T-cell (primary cell): ENCODE measurements at regions of chr9 and their contacts with region 1.

Region 1: GRCh38 chr9:113932906-113933584 is 56.9 kb downstream of the ZNF618 start:
- DNase-seq: no peak
- ATAC-seq: no peak
- H3K4me3 ChIP-seq: no peak overlapping the region
- H3K4me3 Mint-ChIP-seq: no peak overlapping the region
- H3K27ac ChIP-seq: no peak overlapping the region
- H3K27ac Mint-ChIP-seq: no peak overlapping the region
- H3K4me1 ChIP-seq: no peaks in the 10 kb centered on the region
- H3K4me1 Mint-ChIP-seq: no peaks in the 10 kb centered on the region
- H3K27me3 ChIP-seq: no peaks in the 10 kb centered on the region
- H3K27me3 Mint-ChIP-seq: peaks cover 2 to 5% of the 10 kb centered on the region in 2 donors

Region 2: DNA sequence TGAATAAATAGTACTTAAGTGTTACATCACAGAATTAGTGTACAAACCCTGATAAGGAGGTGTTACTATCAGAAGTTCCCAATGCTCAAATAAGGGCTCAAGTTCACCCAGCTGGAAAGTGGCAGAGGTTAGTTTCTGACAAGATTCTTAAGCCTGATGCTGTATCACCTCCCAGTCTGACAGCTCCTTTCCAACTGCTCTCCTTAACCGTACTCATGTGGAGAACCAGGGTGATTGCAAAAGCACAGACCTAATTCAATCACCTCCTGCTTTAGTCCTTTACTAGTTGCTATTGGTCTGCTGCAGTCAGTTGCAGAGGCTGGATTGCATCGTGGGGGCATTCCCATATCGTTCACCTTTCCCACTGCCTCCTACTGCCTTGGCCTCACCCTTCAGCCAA is 157.3 kb before region 1 on chr9:
- CTCF ChIA-PET with region 1: no interaction called
- POLR2A ChIA-PET with region 1: no interaction called
- DNase-seq: no peak
- ATAC-seq: no peak
- H3K4me3 ChIP-seq: no peak overlapping the region
- H3K4me3 Mint-ChIP-seq: no peak overlapping the region
- H3K27ac ChIP-seq: no peak overlapping the region
- H3K27ac Mint-ChIP-seq: no peak overlapping the region
- H3K4me1 ChIP-seq: no peaks in the 10 kb centered on the region
- H3K4me1 Mint-ChIP-seq: no peaks in the 10 kb centered on the region
- H3K27me3 ChIP-seq: peaks cover 0 to 6% of the 10 kb centered on the region in 2 experiments
- H3K27me3 Mint-ChIP-seq: peaks cover 13 to 15% of the 10 kb centered on the region in 2 donors

Region 3: GRCh38 chr9:113943112-113944009 is 10.3 kb after region 1 on chr9:
- CTCF ChIA-PET with region 1: no interaction called
- POLR2A ChIA-PET with region 1: no interaction called
- DNase-seq: no peak
- ATAC-seq: no peak
- H3K4me3 ChIP-seq: no peak overlapping the region
- H3K4me3 Mint-ChIP-seq: no peak overlapping the region
- H3K27ac ChIP-seq: no peak overlapping the region
- H3K27ac Mint-ChIP-seq: no peak overlapping the region
- H3K4me1 ChIP-seq: no peaks in the 10 kb centered on the region
- H3K4me1 Mint-ChIP-seq: no peaks in the 10 kb centered on the region
- H3K27me3 ChIP-seq: peaks cover 0 to 4% of the 10 kb centered on the region in 2 experiments
- H3K27me3 Mint-ChIP-seq: peaks cover 0 to 6% of the 10 kb centered on the region in 2 donors

Region 4: DNA sequence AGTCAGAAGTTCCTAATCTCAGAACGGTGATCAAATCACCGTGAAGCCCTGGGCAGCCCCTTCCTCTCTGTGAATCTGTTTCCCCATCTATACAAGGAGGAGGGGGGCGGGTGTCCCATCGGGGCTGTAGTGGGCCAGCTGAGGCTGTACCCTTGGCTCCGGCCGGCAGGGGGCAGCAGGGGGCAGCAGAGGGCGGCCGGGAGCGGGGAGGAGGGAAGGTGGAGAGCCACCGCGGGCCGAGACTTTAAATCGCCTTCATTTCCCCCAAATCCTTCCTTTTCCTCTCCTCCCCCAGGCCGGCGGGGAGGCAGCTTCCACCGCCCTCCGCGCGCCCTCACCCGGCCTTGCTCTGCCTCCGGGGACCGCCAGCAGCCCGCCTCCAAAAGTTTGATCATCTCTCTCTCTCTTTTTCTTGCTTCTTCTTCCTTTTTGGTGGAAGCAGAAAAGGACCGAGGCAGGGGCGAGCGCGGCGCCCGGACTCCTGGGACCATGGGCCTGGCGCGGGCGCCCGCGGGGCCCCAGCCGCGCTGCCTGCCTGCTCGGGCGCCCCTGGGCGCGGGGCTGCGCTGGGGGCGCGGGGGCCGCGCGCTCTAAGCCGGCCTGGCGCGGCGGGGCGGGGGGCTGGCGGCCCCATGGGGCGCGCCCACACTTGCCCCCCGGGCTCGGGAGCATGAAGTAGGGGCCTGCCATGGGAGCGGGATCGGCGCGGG is 222.4 kb after region 1 on chr9 and contains the start of gene COL27A1:
- CTCF ChIA-PET with region 1: interaction called in 1 of 2 experiments, 13 read pairs
- POLR2A ChIA-PET with region 1: no interaction called
- DNase-seq: peak; percentile 26 to 79 (median 62)
- ATAC-seq: peak; percentile 72 to 87 (median 84)
- H3K4me3 ChIP-seq: peak within 1 kb of the TSS; percentile 49 to 60
- H3K4me3 Mint-ChIP-seq: peak within 1 kb of the TSS; percentile 82 to 92 (median 85)
- H3K27ac ChIP-seq: no peak within 1 kb of the TSS
- H3K27ac Mint-ChIP-seq: peak within 1 kb of the TSS; percentile 8 to 73
- H3K4me1 ChIP-seq: peaks cover 0 to 32% of the 10 kb centered on the region in 2 experiments
- H3K4me1 Mint-ChIP-seq: peaks cover 18 to 25% (median 19%) of the 10 kb centered on the region in 3 donors
- H3K27me3 ChIP-seq: peaks cover 5 to 70% of the 10 kb centered on the region in 2 experiments
- H3K27me3 Mint-ChIP-seq: peaks cover 30 to 53% of the 10 kb centered on the region in 2 donors
- total RNA-seq, gene COL27A1: 0.53 to 1.7 (median 0.95) TPM